ENCODE measurements at regions of chr10 and their contacts with region 1.

Region 1: GRCh38 chr10:62025901-62026879 is 124.7 kb downstream of the ARID5B start:
- DNase-seq: no peak
- ATAC-seq: no peak
- H3K4me3 ChIP-seq: no peak overlapping the region
- H3K4me3 Mint-ChIP-seq: no peak overlapping the region
- H3K27ac ChIP-seq: no peak overlapping the region
- H3K27ac Mint-ChIP-seq: peak overlapping the region in 1 of 2 donors; percentile 17
- H3K4me1 ChIP-seq: peaks cover under 1 to 7% of the 10 kb centered on the region in 2 experiments
- H3K4me1 Mint-ChIP-seq: peaks cover 46 to 89% (median 86%) of the 10 kb centered on the region in 3 donors
- H3K27me3 ChIP-seq: no peaks in the 10 kb centered on the region
- H3K27me3 Mint-ChIP-seq: no peaks in the 10 kb centered on the region

Region 2: GRCh38 chr10:63201118-63201517 is 1174.9 kb after region 1 on chr10:
- CTCF ChIA-PET with region 1: no interaction called
- POLR2A ChIA-PET with region 1: interaction called in 1 of 2 experiments, 10 read pairs
- DNase-seq: no peak
- ATAC-seq: no peak
- H3K4me3 ChIP-seq: no peak overlapping the region
- H3K4me3 Mint-ChIP-seq: no peak overlapping the region
- H3K27ac ChIP-seq: no peak overlapping the region
- H3K27ac Mint-ChIP-seq: no peak overlapping the region
- H3K4me1 ChIP-seq: peaks cover 0 to 4% of the 10 kb centered on the region in 2 experiments
- H3K4me1 Mint-ChIP-seq: peaks cover 17 to 27% (median 21%) of the 10 kb centered on the region in 3 donors
- H3K27me3 ChIP-seq: no peaks in the 10 kb centered on the region
- H3K27me3 Mint-ChIP-seq: no peaks in the 10 kb centered on the region